Posterior vena cava (tissue), 2 donors: ENCODE measurements at regions of chr5 and their contacts with region 1.

Region 1: DNA sequence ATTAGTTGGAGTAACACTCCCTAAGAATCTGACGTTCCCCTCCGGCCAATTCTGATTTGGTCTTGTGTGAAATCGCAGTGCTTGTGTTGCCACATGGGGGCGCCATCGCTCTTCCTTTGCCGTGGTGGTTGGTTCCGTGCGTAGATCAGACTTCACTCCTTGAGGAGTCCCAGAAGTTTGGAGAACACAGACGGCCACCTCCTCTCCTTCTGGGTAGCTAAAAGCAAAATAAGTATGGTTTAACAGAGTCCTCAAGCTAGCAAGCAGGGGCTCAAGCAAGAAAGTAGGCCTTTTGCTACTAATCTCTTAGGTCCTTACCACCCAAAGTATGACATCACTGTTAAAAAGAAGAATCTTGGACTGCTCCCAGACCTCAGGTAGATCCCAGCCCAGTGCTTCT is 59.5 kb downstream of the HSPA4 start:
- DNase-seq: peak; percentile 96

Region 2: GRCh38 chr5:133179405-133179804 is 68.1 kb after region 1 on chr5:
- intact Hi-C with region 1: no loop called
- DNase-seq: no peak

Region 3: DNA sequence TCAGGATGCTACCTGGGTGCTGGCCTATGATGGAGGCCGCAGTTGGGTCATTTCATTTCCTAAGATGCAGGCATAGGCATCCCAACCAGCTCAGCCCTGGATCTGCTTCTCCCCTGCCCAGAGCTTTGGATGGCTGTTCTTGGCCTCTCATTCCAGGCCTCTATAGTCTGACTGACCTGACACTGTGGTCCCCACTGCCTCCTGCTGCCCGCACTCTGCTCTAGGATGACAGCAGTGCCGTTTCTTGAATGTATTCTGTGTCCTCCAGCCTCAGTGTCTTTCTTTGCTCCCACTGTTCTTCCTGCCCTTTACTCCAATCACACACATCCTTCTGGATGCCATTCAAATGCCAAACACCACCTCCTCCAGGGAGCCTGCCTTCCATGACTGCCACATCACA is 176.2 kb after region 1 on chr5:
- intact Hi-C with region 1: loop called in 1 of 2 experiments (anchors 10 kb)
- DNase-seq: no peak